Activated naive CD4-positive, alpha-beta T cell treated with anti-CD3 and anti-CD28 coated beads for 36 hours (primary cell): ENCODE measurements at regions of chr15 and their contacts with region 1.

Region 1: DNA sequence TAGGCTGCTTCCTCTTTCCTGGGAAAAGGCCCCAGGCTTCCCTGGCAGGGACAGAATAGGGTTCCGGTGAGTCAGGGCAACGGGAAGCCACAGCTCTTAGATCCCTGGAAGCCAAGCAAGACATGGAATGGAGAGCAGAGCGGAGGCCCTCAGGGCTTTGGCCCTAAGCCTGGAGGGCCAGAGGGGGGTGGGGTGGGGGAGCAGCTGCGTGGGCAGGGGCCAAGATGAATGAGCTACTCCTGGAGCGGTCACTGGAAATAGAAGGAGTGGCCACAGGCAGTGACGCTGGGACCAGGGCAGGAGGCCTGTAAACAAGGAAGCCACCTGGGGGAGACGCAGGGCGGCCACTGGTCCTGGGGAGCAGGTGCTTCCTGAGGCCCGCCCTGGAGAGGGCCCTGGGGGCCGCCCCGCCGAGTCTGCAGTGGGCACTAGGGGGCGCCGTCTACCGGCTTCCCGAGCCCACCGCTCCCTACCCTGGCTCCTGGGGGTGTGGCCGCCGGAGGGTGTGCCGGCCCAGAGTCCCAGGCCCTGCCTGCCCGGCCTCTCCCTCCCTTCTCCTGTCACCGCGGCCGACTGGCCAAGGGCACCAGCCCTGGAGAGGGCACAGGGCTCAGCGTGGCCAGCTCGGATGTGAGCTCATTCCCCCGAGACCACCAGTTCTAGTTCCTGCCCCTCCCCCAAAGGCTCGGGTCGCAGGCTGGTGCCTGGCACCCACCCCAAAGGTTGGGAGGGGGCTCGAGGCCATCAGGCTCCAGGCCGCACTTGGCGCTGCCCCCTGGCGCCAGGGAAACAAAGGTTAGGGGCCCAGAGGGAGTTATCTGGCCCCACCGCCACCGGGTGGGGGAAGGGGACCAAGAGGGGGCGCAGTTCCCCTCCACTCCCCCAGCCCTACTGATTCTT is 12.1 kb downstream of the VPS18 start:
- DNase-seq: peak; percentile 87
- H3K4me3 Mint-ChIP-seq: peak overlapping the region; percentile 73
- H3K27ac Mint-ChIP-seq: peak overlapping the region; percentile 24
- H3K4me1 Mint-ChIP-seq: peaks cover 21% of the 10 kb centered on the region
- H3K27me3 Mint-ChIP-seq: no peaks in the 10 kb centered on the region

Region 2: GRCh38 chr15:40918146-40918798 is 11.9 kb after region 1 on chr15:
- CTCF ChIA-PET with region 1: interaction called, 19 read pairs
- intact Hi-C with region 1: no loop called
- DNase-seq: no peak
- H3K4me3 Mint-ChIP-seq: no peak overlapping the region
- H3K27ac Mint-ChIP-seq: no peak overlapping the region
- H3K4me1 Mint-ChIP-seq: no peaks in the 10 kb centered on the region
- H3K27me3 Mint-ChIP-seq: no peaks in the 10 kb centered on the region

Region 3: DNA sequence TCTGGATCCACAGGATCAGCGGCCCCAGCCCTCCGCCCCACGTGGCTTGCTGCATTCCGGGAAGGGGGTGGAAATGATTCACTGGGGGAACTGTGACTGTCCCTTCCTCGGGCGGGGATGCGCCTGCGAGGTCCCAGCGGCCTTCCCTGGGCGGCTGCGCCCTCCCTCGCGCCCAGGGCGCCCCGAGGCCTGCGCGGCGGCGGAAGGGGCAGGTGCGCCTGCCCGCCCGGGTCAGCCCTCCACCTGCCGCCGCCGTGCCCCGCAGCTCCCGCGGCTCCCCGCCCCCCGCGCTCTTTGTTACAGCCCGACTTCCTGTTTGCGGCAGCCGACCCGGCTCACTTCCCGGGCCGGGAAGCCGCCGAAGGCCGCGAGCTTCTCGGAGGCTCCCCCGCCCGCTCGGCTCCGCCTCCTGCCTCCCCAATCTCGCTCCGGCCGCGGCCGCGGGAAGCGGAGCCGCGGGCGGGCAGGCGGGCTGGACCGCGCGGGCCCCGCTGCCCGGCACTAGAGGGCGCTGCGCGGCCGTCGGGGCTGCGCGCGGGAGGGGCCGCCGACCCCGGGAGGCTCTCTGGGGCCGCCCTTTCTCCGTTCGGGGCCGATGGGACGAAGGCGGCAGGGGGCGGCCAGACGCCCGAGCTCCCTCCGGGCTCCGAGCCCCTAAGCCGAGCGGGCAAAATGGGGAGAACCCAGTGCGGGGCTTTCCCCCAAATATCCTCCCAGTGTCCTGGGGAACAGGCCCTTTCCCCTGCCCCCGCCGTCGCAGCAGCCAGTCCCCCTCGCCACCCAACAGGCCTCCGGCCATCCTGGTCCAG is 35.4 kb after region 1 on chr15:
- CTCF ChIA-PET with region 1: interaction called, 52 read pairs
- intact Hi-C with region 1: loop called (anchors 2 kb)
- DNase-seq: peak; percentile 80
- H3K4me3 Mint-ChIP-seq: peak overlapping the region; percentile 82
- H3K27ac Mint-ChIP-seq: peak overlapping the region; percentile 78
- H3K4me1 Mint-ChIP-seq: peaks cover 32% of the 10 kb centered on the region
- H3K27me3 Mint-ChIP-seq: no peaks in the 10 kb centered on the region

Region 4: DNA sequence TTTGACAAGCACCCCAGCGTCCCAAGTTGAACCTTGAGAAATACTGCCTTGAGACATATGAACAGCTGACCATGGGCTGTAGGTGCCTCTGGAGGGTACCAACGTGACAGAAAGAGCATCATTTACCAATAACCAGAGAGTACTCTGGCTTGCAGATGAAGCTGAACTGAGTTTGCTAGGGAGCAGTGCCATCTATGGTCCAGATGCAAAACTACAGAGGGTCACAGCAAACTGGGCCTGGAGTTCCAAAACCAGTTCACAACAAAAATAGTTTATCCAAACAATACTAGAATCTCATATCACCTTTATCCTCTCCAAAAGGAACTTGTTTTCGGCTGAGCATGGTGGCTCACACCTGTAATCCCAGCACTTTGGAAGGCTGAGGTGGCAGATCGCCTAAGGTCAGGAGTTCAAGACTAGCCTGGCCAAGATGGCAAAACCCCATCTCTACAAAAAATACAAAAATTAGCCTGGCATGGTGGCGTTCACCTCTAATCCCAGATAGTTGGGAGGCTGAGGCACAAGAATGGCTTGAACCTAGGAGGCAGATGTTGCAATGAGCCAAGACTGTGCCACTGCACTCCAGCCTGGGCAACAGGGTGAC is 116.2 kb after region 1 on chr15:
- CTCF ChIA-PET with region 1: interaction called, 76 read pairs
- intact Hi-C with region 1: loop called (anchors 1 kb)
- DNase-seq: peak; percentile 56
- H3K4me3 Mint-ChIP-seq: no peak overlapping the region
- H3K27ac Mint-ChIP-seq: no peak overlapping the region
- H3K4me1 Mint-ChIP-seq: no peaks in the 10 kb centered on the region
- H3K27me3 Mint-ChIP-seq: no peaks in the 10 kb centered on the region

Region 5: DNA sequence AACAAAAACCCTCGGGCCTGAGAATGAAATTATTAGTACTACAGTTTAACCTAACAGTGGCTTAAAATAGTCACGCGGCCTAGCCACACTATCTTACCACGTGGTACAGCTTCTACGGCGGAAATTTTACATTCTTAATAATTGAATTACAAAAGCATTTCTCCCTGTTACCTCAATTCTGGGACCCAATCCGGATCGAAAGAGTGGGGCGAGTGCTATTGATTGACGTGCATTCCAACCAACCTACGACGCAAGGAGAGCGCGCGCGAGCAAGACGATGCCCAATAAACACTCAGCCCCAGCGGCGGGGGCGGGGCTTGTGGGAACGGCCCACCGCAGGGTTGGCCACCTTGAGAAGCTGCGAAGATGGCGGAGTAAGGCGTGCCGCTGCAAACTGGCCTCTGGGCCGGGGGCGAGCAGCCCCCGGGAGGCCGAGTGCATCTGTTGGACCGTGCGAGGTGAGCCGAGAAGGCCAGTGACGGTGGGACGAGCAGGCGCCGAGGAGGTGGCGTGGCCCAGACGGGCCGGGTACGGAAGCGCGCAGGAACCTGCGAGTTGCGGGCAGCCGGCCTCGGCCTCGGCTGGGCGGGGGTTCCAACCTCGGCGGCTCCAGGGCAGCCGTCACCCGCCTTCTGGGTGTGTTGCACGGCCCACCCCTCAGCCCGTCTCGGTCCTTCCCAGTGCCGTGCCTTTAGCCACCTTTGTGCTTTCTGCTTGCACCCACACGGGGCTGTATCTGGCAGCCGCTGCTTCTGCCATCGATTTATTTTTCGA is 377.5 kb after region 1 on chr15:
- CTCF ChIA-PET with region 1: no interaction called
- intact Hi-C with region 1: loop called (anchors 5 kb)
- DNase-seq: peak; percentile 99
- H3K4me3 Mint-ChIP-seq: peak overlapping the region; percentile 99
- H3K27ac Mint-ChIP-seq: peak overlapping the region; percentile 97
- H3K4me1 Mint-ChIP-seq: peaks cover 45% of the 10 kb centered on the region
- H3K27me3 Mint-ChIP-seq: no peaks in the 10 kb centered on the region